Ovary (tissue), 10 donors: ENCODE measurements at regions of chr11 and their contacts with region 1.

Region 1: DNA sequence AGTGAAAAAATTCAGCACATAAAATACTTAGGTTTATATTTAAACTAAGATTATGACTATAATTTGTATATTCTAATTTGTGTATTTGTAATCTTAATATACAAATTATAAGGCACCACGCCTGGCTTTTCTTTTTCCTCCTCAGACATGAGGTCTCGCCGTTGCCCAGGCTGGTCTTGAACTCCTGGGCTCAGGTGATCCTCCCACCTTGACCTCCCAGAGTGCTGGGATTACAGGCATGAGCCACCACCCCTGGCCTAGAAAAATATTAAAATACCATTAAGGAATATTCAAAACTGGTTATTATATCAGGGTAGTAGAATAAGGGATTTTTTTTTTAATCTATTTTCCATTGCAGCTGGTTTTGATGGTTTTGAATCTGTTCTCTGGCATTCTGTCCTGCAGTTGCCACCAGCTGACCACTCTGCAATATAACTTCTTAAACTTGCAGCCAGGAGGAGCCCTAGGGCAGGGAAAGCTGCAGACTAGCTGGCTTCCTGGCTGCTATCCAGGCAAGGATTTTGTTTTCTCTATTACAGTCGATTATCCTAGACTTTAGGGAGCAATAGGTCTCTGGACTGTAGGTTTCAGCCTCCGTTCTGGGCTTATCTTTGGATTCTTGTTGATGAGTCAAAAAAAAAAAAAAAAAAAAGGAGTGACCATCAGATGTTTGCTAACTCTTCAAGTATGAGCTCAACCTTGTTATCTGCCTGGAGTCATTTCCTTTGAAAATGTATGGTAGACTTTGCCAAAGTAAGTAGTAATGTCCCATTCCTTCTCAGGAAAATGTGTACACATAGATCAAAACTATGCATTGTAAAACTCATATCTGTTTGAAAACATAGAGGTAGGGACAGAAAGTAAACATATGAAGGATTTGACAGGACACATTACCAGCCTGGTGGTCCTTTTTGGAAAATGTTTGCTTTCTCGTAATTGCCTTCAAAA is 13.2 kb downstream of the POLA2 start:
- DNase-seq: peak; percentile 80 to 92 (median 85)
- H3K4me3 ChIP-seq: no peak overlapping the region
- H3K27ac ChIP-seq: peak overlapping the region in 1 of 2 donors; percentile 31
- H3K4me1 ChIP-seq: no peaks in the 10 kb centered on the region
- H3K27me3 ChIP-seq: no peaks in the 10 kb centered on the region
- CTCF ChIP-seq: peak; percentile 61 to 96 (median 96)
- EP300 ChIP-seq: no peak
- POLR2A ChIP-seq: peak; percentile 12

Region 2: DNA sequence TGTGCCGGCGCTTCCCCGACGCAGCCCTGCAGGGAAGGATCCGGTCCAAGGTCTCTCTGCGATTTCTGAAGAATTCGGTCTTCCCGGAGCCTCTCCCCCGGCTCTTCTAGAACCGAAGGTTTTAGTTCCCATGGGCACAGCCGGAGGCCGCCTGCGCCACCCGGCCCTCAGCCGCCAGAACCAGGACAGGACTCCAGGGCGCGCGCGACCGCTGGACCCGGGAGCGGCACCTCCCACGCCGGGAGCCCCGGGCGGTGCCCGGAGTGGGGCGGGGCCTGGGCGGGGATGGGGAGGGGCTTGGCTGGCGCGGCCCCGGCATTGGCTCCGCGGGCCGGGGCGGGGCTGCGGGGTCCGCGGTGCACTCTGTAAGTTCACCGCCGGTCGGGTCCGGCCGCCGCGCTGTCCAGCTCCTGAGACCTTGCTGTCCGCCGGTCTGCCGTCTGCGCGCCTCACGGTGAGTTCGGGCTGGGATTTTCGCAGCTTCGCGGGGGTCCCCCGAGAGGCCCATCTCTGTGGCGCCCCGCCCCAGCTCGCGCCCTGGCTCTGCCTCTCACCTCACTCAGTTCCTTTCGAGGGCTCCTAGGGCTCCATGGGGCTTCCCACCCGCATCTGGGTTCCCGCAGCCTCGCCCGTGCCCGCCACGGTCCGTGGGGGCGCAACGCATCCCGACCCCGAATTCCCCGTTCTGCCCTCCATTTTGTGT is 39.6 kb after region 1 on chr11 and contains the start of gene CDC42EP2:
- intact Hi-C with region 1: loop called in 3 of 4 experiments (anchors 1 to 2 kb)
- DNase-seq: peak; percentile 87 to 94 (median 90)
- H3K4me3 ChIP-seq: peak within 1 kb of the TSS; percentile 96
- H3K27ac ChIP-seq: peak within 1 kb of the TSS; percentile 25 to 84
- H3K4me1 ChIP-seq: peaks cover 15% of the 10 kb centered on the region
- H3K27me3 ChIP-seq: no peaks in the 10 kb centered on the region
- CTCF ChIP-seq: peak in 2 of 3 donors; percentile 26 to 36
- EP300 ChIP-seq: no peak
- POLR2A ChIP-seq: peak; percentile 82
- total RNA-seq, gene CDC42EP2: 13.7 to 46.9 (median 20.1) TPM

Region 3: GRCh38 chr11:65321828-65322485 is 46.9 kb after region 1 on chr11:
- intact Hi-C with region 1: loop called in 1 of 4 experiments (anchors 2 kb)
- DNase-seq: no peak
- H3K4me3 ChIP-seq: no peak overlapping the region
- H3K27ac ChIP-seq: no peak overlapping the region
- H3K4me1 ChIP-seq: peaks cover under 1% of the 10 kb centered on the region
- H3K27me3 ChIP-seq: no peaks in the 10 kb centered on the region
- CTCF ChIP-seq: no peak
- EP300 ChIP-seq: no peak
- POLR2A ChIP-seq: no peak

Region 4: DNA sequence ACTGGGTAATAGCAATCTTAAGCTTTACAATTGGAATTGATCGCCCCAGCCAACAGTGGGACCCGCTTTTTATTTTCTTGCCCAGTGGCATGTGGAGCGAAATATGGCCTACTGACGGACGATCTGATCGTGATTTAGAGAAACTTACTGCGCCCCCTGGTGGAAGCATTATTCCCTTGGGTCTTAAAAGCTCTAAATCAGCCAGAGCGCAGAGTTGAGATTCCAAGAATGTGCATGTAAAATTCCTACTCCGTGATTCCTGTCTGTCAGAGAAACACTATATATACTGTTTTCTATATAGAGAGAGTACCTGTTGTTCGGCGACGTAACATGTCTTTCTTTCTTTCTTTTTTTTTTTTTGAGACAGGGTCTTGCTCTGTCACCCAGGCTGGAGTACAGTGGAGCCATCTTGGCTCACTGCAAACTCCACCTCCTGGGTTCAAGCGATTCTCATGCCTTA is 55.0 kb after region 1 on chr11:
- intact Hi-C with region 1: loop called in 1 of 4 experiments (anchors 2 kb)
- DNase-seq: peak; percentile 77 to 94 (median 85)
- H3K4me3 ChIP-seq: no peak overlapping the region
- H3K27ac ChIP-seq: no peak overlapping the region
- H3K4me1 ChIP-seq: peaks cover 2% of the 10 kb centered on the region
- H3K27me3 ChIP-seq: no peaks in the 10 kb centered on the region
- CTCF ChIP-seq: peak; percentile 66 to 81 (median 80)
- EP300 ChIP-seq: no peak
- POLR2A ChIP-seq: no peak

Region 5: DNA sequence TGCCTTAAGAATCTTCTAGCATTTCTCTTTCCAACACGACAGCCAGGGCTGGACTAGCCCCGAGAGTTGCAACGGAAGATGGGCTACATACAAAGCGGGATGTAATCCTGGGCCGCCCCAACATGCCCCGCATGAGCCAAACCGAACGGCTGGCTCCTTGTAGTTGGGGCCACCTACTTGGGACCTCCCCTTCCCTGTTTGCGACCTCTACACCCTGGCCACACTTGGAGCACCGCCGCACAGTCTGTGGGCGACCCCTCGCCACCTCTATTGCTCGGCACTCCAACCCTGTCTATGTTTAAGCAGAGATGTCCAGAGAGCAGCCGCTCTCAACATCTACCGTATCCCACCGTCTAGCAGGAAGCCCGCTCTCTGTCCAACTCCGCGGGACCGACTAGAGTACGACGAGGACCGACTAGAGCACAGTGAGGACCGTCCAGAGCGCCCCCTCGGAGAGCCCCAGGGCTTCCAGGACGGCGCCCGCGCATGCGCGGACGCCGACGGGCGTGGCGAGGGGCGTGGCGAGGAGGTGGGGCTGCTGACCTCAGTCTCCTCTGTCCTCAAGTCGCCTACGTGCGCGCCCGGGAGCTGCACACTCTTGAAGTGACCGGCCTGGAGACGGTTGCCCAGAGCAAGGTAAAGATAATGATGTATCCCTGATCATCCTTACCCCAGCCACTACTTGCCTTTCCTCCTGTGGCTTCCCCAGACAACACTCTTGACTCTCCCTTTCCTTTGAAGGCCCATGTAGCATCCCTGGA is 179.9 kb after region 1 on chr11:
- intact Hi-C with region 1: no loop called
- DNase-seq: peak; percentile 91 to 93 (median 92)
- H3K4me3 ChIP-seq: peak overlapping the region; percentile 51
- H3K27ac ChIP-seq: peak overlapping the region; percentile 81 to 88
- H3K4me1 ChIP-seq: peaks cover 11% of the 10 kb centered on the region
- H3K27me3 ChIP-seq: no peaks in the 10 kb centered on the region
- CTCF ChIP-seq: no peak
- EP300 ChIP-seq: no peak
- POLR2A ChIP-seq: peak; percentile 89